Activated B cell treated with CpG ODN at 0.5 μM for 24 hours (primary cell): ENCODE measurements at regions of chr22 and their contacts with region 1.

Region 1: DNA sequence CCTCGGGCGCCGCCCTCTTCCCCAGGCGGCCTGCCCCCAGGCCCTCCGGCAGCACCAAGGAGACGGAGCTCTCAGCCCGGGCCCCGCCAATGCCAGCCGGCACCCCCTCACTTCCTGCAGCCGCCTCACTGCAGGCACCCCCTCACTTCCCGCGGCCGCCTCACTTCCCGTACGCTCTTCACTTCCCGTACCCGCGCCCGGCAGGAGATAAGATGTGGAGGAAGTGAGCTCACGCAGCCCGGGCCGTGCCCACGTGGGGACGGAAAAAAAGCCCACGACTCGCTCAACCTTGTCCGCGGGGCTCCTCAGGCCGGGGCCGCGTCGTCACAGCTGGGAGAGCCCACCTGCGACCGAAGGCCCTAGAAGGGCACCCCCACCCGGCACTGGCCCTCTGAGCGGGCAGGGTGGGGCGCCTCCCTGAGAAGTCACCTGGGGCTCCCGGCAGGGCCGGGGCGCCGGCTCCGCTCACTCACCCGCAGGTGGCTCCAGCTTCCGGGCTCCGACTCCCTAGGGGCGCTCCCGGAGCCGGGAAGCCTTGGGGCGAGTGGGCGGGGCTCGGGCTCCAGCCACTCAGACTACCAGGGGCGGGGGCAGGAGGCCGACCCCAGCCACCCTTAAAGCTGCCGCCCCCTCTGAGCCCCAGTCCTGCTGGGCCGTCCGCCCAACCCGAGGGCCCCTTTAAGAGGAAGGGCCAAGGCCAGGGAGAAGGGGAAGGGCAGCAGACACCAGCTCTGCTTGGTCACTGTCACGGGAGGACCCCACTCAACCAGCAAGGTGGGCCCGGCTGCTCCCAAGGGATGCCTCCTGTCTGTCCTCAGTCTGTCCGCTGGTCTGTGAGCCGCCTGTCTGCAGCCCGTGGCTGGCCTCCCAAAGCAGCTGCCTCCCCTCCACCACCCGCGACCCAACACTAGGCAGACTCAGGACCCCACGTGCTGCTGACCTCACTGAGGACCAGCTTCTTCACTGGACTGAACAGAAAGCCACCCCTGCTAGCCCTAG is 31.4 kb downstream of the PISD start:
- DNase-seq: peak; percentile 83
- ATAC-seq: peak; percentile 80
- H3K4me3 Mint-ChIP-seq: peak overlapping the region; percentile 88
- H3K27ac Mint-ChIP-seq: peak overlapping the region; percentile 95
- H3K4me1 Mint-ChIP-seq: peaks cover 66% of the 10 kb centered on the region
- H3K27me3 Mint-ChIP-seq: no peaks in the 10 kb centered on the region
- CTCF ChIP-seq: no peak

Region 2: GRCh38 chr22:31345331-31346254 is 285.0 kb before region 1 on chr22:
- CTCF ChIA-PET with region 1: no interaction called
- POLR2A ChIA-PET with region 1: interaction called, 24 read pairs
- intact Hi-C with region 1: loop called (anchors 1 kb)
- DNase-seq: peak; percentile 89
- ATAC-seq: peak; percentile 58
- H3K4me3 Mint-ChIP-seq: peak overlapping the region; percentile 83
- H3K27ac Mint-ChIP-seq: peak overlapping the region; percentile 80
- H3K4me1 Mint-ChIP-seq: peaks cover 50% of the 10 kb centered on the region
- H3K27me3 Mint-ChIP-seq: no peaks in the 10 kb centered on the region
- CTCF ChIP-seq: peak; percentile 56

Region 3: DNA sequence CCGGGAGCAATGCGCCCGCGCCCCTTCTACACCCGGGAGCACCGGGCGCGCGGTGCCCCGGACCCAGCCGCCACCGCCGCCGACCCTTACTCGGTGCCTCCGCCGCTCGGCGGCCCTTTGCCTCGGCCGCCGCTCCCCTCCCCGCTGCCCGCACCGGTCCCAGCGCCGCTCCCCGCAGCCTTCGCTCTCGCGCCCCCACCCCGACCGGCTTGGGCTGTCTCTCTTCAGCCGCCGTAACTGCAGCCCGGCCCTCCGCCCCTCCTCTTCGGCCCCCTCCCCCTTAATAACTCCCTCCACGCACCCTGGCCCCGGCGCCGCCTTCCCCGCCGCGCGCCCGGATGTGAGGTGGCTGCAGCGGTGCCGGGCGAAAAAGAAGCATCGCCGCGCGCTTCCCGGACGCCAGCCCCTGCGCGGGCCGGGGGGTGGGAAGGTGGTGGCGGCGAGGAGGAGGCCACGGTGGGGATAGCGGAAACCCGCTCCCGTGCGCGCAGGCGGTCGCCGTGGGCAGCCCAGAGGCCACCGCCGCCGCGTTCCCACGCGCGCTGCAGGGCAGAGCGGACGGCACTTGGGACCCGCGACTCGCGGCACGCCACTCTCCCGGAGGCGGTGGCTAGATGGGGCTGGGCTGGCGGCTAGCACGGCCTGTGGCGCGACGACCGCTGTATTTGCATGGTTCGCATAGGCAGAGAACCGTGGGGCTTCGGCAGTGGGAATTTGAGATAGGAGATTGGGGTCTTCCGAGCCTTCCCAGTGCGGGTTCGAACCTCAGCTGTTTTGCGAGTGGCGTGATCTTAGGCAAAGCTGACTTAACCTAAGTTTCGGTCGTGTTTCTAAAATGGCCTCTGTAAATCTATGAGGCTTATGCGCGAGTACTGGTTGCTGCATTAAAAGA is 140.8 kb before region 1 on chr22 and contains the start of gene EIF4ENIF1:
- CTCF ChIA-PET with region 1: no interaction called
- POLR2A ChIA-PET with region 1: interaction called, 8 read pairs
- intact Hi-C with region 1: loop called (anchors 1 kb)
- DNase-seq: peak; percentile 82
- ATAC-seq: peak; percentile 66
- H3K4me3 Mint-ChIP-seq: peak within 1 kb of the TSS; percentile 93
- H3K27ac Mint-ChIP-seq: peak within 1 kb of the TSS; percentile 100
- H3K4me1 Mint-ChIP-seq: peaks cover 54% of the 10 kb centered on the region
- H3K27me3 Mint-ChIP-seq: no peaks in the 10 kb centered on the region
- CTCF ChIP-seq: no peak
- total RNA-seq, gene EIF4ENIF1: 46.4 and 53.6 TPM in 2 replicates

Region 4: GRCh38 chr22:31585161-31585859 is 45.3 kb before region 1 on chr22:
- CTCF ChIA-PET with region 1: interaction called, 4 read pairs
- POLR2A ChIA-PET with region 1: interaction called, 3 read pairs
- intact Hi-C with region 1: loop called (anchors 1 kb)
- DNase-seq: no peak
- ATAC-seq: no peak
- H3K4me3 Mint-ChIP-seq: no peak overlapping the region
- H3K27ac Mint-ChIP-seq: no peak overlapping the region
- H3K4me1 Mint-ChIP-seq: peaks cover 19% of the 10 kb centered on the region
- H3K27me3 Mint-ChIP-seq: no peaks in the 10 kb centered on the region
- CTCF ChIP-seq: no peak

Region 5: DNA sequence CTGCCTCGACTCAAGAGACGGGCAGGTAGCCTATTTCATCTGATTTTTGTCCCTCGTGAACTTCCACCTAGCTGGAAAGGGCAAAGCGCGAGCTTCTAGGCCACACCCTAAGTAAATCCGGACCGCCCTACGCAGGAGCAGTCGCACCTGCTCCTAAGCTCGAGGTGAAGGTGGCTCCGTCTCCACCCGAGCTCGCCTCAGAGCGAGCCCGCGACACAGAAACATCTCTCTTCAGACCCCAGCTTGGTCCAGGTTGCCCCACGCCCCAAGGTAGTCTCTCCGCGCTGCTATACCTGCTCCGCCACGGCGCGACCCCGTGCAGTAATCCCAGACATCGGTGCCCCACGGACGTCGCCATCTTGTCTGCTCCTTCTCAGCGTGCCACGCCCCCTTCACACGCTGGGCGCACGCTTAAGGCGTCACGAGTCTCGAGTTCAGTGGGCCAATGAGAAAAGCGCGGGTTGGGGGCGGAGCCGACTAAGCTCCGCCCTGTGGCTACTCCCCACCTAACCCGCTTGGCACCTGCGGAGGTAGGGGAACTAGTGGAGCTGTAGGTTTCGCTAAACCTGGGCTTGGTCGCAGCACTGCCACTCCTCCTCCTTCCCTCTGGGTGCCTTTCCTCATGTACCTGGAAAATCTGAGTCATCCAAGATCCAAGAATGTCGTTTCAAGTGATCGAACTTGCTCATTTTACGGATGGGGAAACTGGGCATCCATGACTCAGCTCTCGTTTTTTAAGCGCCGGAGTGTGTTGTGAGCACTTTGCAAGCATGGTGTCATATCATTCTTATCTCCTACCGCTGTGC is 31.4 kb after region 1 on chr22 and contains the start of gene PISD:
- CTCF ChIA-PET with region 1: interaction called, 4 read pairs
- POLR2A ChIA-PET with region 1: interaction called, 21 read pairs
- intact Hi-C with region 1: no loop called
- DNase-seq: peak; percentile 96
- ATAC-seq: peak; percentile 96
- H3K4me3 Mint-ChIP-seq: peak within 1 kb of the TSS; percentile 96
- H3K27ac Mint-ChIP-seq: peak within 1 kb of the TSS; percentile 91
- H3K4me1 Mint-ChIP-seq: peaks cover 32% of the 10 kb centered on the region
- H3K27me3 Mint-ChIP-seq: no peaks in the 10 kb centered on the region
- CTCF ChIP-seq: no peak
- total RNA-seq, gene PISD: 53.7 and 61.6 TPM in 2 replicates